CD4-positive, alpha-beta T cell (primary cell): ENCODE measurements at regions of chr20 and their contacts with region 1.

Region 1: GRCh38 chr20:63537525-63538203 is 488 bp upstream of the PTK6 start:
- DNase-seq: peak; percentile 83 to 97 (median 88)
- ATAC-seq: peak; percentile 86
- H3K4me3 ChIP-seq: peak overlapping the region; percentile 59
- H3K4me3 Mint-ChIP-seq: peak overlapping the region; percentile 80
- H3K27ac ChIP-seq: peak overlapping the region; percentile 59 to 73
- H3K27ac Mint-ChIP-seq: peak overlapping the region; percentile 78
- H3K4me1 ChIP-seq: peaks cover 37% of the 10 kb centered on the region
- H3K4me1 Mint-ChIP-seq: peaks cover 16% of the 10 kb centered on the region
- H3K27me3 ChIP-seq: no peaks in the 10 kb centered on the region
- H3K27me3 Mint-ChIP-seq: no peaks in the 10 kb centered on the region
- CTCF ChIP-seq: peak; percentile 97

Region 2: DNA sequence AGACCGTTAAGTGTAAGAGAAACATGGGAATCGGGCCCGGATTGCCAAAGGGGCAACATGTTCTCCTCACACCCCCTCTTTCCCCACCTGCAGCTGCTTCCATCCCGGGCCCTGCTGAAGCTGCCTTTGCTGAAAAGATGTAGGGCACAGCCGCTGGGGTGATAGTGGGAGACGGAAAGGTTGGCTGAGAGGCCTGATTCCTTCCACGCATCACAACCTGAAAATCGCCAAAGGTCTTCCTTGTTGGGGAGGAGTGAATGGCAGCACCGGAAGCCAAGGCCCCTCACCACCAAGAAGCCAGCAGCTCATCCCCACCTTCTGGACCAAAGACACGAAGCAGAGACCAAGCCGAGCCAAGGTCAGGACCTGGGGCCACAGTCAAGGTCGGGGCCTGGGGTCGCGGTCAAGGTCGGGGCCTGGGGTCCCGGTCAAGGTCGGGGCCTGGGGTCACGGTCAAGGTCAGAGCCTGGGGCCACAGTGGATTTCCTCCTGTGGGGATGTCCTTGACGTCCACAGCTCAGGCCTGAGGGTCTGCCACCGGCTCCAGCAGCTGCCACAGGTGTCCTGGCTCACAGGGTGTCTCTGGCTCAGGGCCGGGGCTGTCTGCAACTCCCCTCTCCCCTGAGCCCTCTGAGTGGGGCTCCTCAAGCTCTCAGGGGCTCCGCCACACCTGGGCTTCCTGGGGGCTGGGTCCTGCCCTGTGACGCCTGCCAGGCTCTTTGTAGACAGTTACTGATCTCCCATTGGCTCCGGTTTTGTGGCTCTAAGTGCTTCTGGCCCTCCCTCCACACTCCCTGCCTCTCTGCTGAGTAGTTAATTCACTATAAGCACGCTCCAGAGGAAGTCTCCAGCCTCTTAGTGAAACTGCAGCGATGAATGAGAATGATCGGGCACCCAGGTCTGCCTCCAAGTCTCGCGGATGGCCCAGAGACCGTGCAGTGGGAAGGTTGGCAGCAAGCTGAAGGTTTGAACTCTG is 171.0 kb before region 1 on chr20:
- CTCF ChIA-PET with region 1: no interaction called
- POLR2A ChIA-PET with region 1: no interaction called
- intact Hi-C with region 1: no loop called
- DNase-seq: no peak
- ATAC-seq: no peak
- H3K4me3 ChIP-seq: no peak overlapping the region
- H3K4me3 Mint-ChIP-seq: no peak overlapping the region
- H3K27ac ChIP-seq: no peak overlapping the region
- H3K27ac Mint-ChIP-seq: no peak overlapping the region
- H3K4me1 ChIP-seq: no peaks in the 10 kb centered on the region
- H3K4me1 Mint-ChIP-seq: no peaks in the 10 kb centered on the region
- H3K27me3 ChIP-seq: peaks cover 21 to 22% of the 10 kb centered on the region in 2 experiments
- H3K27me3 Mint-ChIP-seq: peaks cover 18% of the 10 kb centered on the region
- CTCF ChIP-seq: no peak

Region 3: GRCh38 chr20:63495741-63496595 is 41.7 kb before region 1 on chr20:
- CTCF ChIA-PET with region 1: interaction called, 11 read pairs
- POLR2A ChIA-PET with region 1: interaction called, 3 read pairs
- intact Hi-C with region 1: no loop called
- DNase-seq: peak; percentile 64 to 88 (median 75)
- ATAC-seq: peak; percentile 68
- H3K4me3 ChIP-seq: peak overlapping the region; percentile 18
- H3K4me3 Mint-ChIP-seq: peak overlapping the region; percentile 45
- H3K27ac ChIP-seq: no peak overlapping the region
- H3K27ac Mint-ChIP-seq: no peak overlapping the region
- H3K4me1 ChIP-seq: peaks cover 33% of the 10 kb centered on the region
- H3K4me1 Mint-ChIP-seq: peaks cover 5% of the 10 kb centered on the region
- H3K27me3 ChIP-seq: peaks cover 30 to 35% of the 10 kb centered on the region in 2 experiments
- H3K27me3 Mint-ChIP-seq: peaks cover 28% of the 10 kb centered on the region
- CTCF ChIP-seq: peak; percentile 93

Region 4: DNA sequence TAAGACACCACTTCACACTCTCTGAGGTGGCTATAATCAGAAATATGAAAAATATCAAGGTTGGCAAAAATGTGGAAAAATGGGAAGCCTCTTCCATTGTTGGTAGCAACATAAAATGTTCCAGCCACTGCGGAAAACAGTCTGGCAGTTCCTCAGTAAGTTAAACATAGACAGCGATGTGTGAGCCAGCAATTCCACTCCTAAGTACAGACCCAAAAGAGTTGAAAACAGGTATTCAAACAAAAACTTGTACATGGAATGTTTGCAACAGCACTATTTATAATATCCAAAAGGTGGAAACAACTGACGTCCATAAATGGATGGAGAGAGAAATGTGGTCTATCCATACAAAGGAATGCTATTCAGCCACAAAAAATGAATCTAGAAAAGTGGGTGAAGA is 24.5 kb before region 1 on chr20:
- CTCF ChIA-PET with region 1: no interaction called
- POLR2A ChIA-PET with region 1: no interaction called
- intact Hi-C with region 1: no loop called
- DNase-seq: no peak
- ATAC-seq: no peak
- H3K4me3 ChIP-seq: no peak overlapping the region
- H3K4me3 Mint-ChIP-seq: no peak overlapping the region
- H3K27ac ChIP-seq: no peak overlapping the region
- H3K27ac Mint-ChIP-seq: no peak overlapping the region
- H3K4me1 ChIP-seq: peaks cover 3% of the 10 kb centered on the region
- H3K4me1 Mint-ChIP-seq: peaks cover 5% of the 10 kb centered on the region
- H3K27me3 ChIP-seq: peaks cover 0 to 12% of the 10 kb centered on the region in 2 experiments
- H3K27me3 Mint-ChIP-seq: peaks cover 42% of the 10 kb centered on the region
- CTCF ChIP-seq: no peak

Region 5: GRCh38 chr20:63580796-63581461 is 43.3 kb after region 1 on chr20:
- CTCF ChIA-PET with region 1: interaction called, 3 read pairs
- POLR2A ChIA-PET with region 1: interaction called, 4 read pairs
- intact Hi-C with region 1: loop called (anchors 2 kb)
- DNase-seq: peak; percentile 62 to 87 (median 76)
- ATAC-seq: peak; percentile 99
- H3K4me3 ChIP-seq: no peak overlapping the region
- H3K4me3 Mint-ChIP-seq: no peak overlapping the region
- H3K27ac ChIP-seq: no peak overlapping the region
- H3K27ac Mint-ChIP-seq: peak overlapping the region; percentile 19
- H3K4me1 ChIP-seq: peaks cover 10% of the 10 kb centered on the region
- H3K4me1 Mint-ChIP-seq: peaks cover 20% of the 10 kb centered on the region
- H3K27me3 ChIP-seq: no peaks in the 10 kb centered on the region
- H3K27me3 Mint-ChIP-seq: no peaks in the 10 kb centered on the region
- CTCF ChIP-seq: peak; percentile 63

Region 6: DNA sequence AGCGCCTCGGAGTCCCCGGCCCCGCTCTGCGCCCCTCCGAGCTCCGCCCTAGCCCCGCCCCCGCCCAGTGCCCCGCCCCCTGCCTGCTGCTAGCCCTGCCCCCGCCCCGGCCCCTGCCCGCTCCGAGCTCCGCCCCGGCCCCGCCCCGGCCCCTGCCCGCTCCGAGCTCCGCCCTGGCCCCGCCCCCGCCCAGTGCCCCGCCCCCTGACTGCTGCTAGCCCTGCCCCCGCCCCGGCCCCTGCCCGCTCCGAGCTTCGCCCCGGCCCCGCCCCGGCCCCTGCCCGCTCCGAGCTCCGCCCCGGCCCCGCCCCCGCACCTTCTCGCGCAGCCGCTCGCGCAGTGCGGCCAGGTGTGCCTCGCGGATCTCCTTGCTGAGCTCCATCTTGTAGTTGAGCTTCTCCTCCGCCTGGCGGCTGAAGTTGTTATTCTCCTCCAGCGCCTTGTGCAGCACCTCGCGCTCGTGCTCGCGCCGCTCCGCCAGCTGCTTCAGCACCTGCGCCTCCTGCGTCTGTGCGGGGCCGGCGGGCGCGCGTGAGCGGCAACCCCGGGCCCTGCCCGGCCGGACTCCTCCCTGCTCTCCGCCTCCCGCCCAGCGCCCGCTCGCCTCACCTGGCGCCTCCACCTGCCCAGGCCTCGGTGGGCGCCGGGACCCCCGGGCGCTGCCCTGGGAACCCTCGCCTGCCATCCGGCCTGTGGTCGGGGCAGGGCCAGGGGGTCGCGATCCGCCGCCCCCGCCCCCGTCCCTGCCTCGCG is 104.3 kb after region 1 on chr20:
- CTCF ChIA-PET with region 1: interaction called, 13 read pairs
- POLR2A ChIA-PET with region 1: interaction called, 33 read pairs
- intact Hi-C with region 1: loop called (anchors 1 to 5 kb)
- DNase-seq: peak; percentile 97 to 100 (median 98)
- ATAC-seq: peak; percentile 60
- H3K4me3 ChIP-seq: peak overlapping the region; percentile 91
- H3K4me3 Mint-ChIP-seq: peak overlapping the region; percentile 88
- H3K27ac ChIP-seq: peak overlapping the region; percentile 68 to 87
- H3K27ac Mint-ChIP-seq: peak overlapping the region; percentile 94
- H3K4me1 ChIP-seq: peaks cover 44% of the 10 kb centered on the region
- H3K4me1 Mint-ChIP-seq: peaks cover 35% of the 10 kb centered on the region
- H3K27me3 ChIP-seq: no peaks in the 10 kb centered on the region
- H3K27me3 Mint-ChIP-seq: peaks cover 4% of the 10 kb centered on the region
- CTCF ChIP-seq: peak; percentile 48

Region 7: DNA sequence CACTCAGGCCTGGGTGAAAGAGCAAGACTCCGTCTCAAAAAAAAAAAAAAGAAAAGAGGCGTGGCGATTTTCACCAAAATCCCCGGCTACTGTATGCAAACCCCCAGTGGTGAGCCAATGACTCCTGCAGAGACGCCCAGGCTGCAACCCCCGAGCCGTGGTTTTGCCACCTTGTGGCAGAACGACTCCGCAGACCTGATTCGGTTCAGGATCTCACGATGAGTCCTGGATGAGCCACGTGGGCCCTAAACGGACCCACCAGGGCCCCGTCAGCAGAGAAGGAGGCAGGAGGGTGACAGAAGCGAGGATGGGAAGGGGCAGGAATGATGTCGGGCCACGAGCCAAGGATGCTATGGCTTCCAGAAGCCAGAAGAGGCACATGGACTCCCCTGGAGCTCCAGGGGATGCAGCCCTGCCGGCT is 244.4 kb after region 1 on chr20:
- CTCF ChIA-PET with region 1: interaction called, 9 read pairs
- POLR2A ChIA-PET with region 1: no interaction called
- intact Hi-C with region 1: loop called in 1 of 2 experiments (anchors 1 kb)
- DNase-seq: peak in 13 of 14 experiments; percentile 16 to 88 (median 48)
- ATAC-seq: peak; percentile 93
- H3K4me3 ChIP-seq: peak overlapping the region; percentile 14
- H3K4me3 Mint-ChIP-seq: peak overlapping the region; percentile 43
- H3K27ac ChIP-seq: peak overlapping the region in 1 of 2 donors; percentile 22
- H3K27ac Mint-ChIP-seq: peak overlapping the region; percentile 67
- H3K4me1 ChIP-seq: peaks cover 23% of the 10 kb centered on the region
- H3K4me1 Mint-ChIP-seq: peaks cover 23% of the 10 kb centered on the region
- H3K27me3 ChIP-seq: no peaks in the 10 kb centered on the region
- H3K27me3 Mint-ChIP-seq: no peaks in the 10 kb centered on the region
- CTCF ChIP-seq: peak; percentile 51

Region 8: GRCh38 chr20:63973636-63974402 is 436.2 kb after region 1 on chr20:
- CTCF ChIA-PET with region 1: interaction called, 3 read pairs
- POLR2A ChIA-PET with region 1: no interaction called
- intact Hi-C with region 1: loop called (anchors 1 to 5 kb)
- DNase-seq: peak; percentile 62 to 89 (median 75)
- ATAC-seq: peak; percentile 51
- H3K4me3 ChIP-seq: no peak overlapping the region
- H3K4me3 Mint-ChIP-seq: peak overlapping the region; percentile 26
- H3K27ac ChIP-seq: peak overlapping the region in 1 of 2 donors; percentile 13
- H3K27ac Mint-ChIP-seq: peak overlapping the region; percentile 58
- H3K4me1 ChIP-seq: peaks cover 43% of the 10 kb centered on the region
- H3K4me1 Mint-ChIP-seq: peaks cover 56% of the 10 kb centered on the region
- H3K27me3 ChIP-seq: no peaks in the 10 kb centered on the region
- H3K27me3 Mint-ChIP-seq: no peaks in the 10 kb centered on the region
- CTCF ChIP-seq: peak; percentile 98

Region 9: DNA sequence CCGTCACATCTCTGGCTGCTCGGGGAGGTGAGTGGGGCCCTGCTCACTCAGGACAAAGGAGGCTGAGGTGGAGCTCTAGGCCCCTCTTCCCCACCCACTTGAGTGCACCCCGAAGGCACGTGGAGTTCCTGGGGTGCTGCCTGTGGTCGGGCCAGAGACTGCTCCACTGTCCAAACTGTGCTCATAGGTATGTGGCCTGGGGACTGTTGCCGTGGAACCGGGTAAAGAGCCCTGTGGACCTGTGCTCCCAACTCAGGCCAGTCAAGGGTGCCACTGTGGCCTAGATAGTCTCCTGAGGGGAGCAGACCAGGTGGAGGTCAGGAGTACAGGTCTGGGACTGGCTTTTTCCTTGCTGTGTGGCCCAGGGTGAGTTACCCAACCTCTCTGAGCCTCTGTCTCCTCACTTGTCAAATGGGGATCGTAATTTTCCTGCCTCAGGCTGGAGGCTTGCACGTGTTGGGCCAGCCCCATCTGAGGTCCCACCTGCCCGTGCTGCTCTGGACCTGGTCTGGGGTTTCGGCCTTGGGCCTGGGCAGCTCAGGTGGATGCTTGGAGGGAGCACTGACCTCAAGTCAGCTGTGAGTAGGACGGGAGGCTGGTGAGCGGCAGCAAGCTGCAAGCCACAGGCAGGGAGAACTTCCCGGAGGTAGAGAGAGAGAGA is 582.1 kb after region 1 on chr20:
- CTCF ChIA-PET with region 1: no interaction called
- POLR2A ChIA-PET with region 1: no interaction called
- intact Hi-C with region 1: loop called in 1 of 2 experiments (anchors 5 kb)
- DNase-seq: no peak
- ATAC-seq: no peak
- H3K4me3 ChIP-seq: peak overlapping the region; percentile 49
- H3K4me3 Mint-ChIP-seq: peak overlapping the region; percentile 60
- H3K27ac ChIP-seq: no peak overlapping the region
- H3K27ac Mint-ChIP-seq: peak overlapping the region; percentile 59
- H3K4me1 ChIP-seq: peaks cover 13% of the 10 kb centered on the region
- H3K4me1 Mint-ChIP-seq: peaks cover 9% of the 10 kb centered on the region
- H3K27me3 ChIP-seq: peaks cover 7% of the 10 kb centered on the region in 2 experiments
- H3K27me3 Mint-ChIP-seq: peaks cover 12% of the 10 kb centered on the region
- CTCF ChIP-seq: no peak